ENCODE measurements at regions of chr7 and their contacts with region 1.

Region 1: DNA sequence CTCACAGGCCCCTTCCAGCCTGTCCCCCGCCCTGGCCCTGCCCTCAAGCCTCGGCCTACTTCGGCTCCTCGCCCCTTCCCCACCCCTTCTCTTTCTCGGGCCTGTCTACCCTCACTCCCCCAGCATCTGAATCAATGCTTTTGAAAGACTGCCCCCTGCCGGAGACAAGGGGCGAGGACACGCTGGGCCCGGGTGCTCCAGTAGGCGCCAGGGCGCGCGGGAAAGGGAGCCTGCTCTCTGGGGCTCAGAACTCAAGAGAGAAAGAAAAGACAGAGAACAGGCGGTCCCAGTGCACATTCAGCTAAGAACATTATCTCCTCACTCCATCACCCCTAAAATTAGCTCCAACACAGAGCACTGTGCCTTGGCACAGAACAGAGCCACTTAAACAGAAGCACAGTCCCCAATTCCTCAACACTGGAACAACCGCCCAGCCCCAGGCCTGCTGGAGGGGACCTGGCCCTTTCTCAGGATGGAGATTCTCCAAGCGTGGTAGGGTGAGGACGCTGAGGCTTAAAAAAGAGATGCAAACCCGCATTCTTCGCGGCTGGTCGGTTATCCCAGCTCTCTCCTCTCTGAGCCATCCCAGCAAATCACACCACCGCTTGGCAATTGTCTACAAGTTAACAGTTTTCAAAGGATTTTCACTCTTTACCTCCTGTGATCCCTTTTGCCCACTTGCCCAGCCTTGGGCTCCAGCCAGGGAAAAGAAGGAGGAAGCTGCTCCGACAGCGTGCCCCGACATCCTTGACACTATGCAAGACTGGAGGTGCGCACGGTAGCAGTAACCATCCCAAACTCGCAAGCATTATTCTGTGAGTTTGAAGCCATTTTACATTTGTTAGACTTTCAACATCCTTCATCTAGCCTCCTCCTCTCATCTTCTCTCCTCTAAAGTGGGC is 2.1 kb downstream of the GIGYF1 start:
- DNase-seq: peak; percentile 76 to 91 (median 83)
- ATAC-seq: peak; percentile 70 to 86 (median 82)
- H3K4me3 ChIP-seq: peak overlapping the region in 9 of 12 donors; percentile 74 to 100 (median 91)
- H3K27ac ChIP-seq: peak overlapping the region in 9 of 12 donors; percentile 12 to 90 (median 35)
- H3K4me1 ChIP-seq: peaks cover 5 to 64% (median 46%) of the 10 kb centered on the region in 12 donors
- H3K27me3 ChIP-seq: no peaks in the 10 kb centered on the region
- CTCF ChIP-seq: peak; percentile 83 to 93 (median 88)
- POLR2A ChIP-seq: no peak

Region 2: GRCh38 chr7:100469227-100470044 is 222.5 kb before region 1 on chr7:
- intact Hi-C with region 1: loop called in 9 of 10 experiments (anchors 2 to 10 kb)
- DNase-seq: peak; percentile 85 to 93 (median 88)
- ATAC-seq: peak; percentile 59 to 75 (median 70)
- H3K4me3 ChIP-seq: no peak overlapping the region
- H3K27ac ChIP-seq: peak overlapping the region in 10 of 12 donors; percentile 8 to 83 (median 64)
- H3K4me1 ChIP-seq: peaks cover 3 to 81% (median 48%) of the 10 kb centered on the region in 12 donors
- H3K27me3 ChIP-seq: no peaks in the 10 kb centered on the region
- CTCF ChIP-seq: peak; percentile 82 to 98 (median 94)
- POLR2A ChIP-seq: peak in 1 of 2 donors; percentile 18

Region 3: GRCh38 chr7:100563809-100564400 is 128.0 kb before region 1 on chr7:
- intact Hi-C with region 1: loop called (anchors 2 to 5 kb)
- DNase-seq: peak; percentile 78 to 88 (median 81)
- ATAC-seq: peak; percentile 37 to 70 (median 63)
- H3K4me3 ChIP-seq: no peak overlapping the region
- H3K27ac ChIP-seq: no peak overlapping the region
- H3K4me1 ChIP-seq: peaks cover 0 to 13% (median 3%) of the 10 kb centered on the region in 12 donors
- H3K27me3 ChIP-seq: no peaks in the 10 kb centered on the region
- CTCF ChIP-seq: peak; percentile 89 to 96 (median 94)
- POLR2A ChIP-seq: no peak

Region 4: DNA sequence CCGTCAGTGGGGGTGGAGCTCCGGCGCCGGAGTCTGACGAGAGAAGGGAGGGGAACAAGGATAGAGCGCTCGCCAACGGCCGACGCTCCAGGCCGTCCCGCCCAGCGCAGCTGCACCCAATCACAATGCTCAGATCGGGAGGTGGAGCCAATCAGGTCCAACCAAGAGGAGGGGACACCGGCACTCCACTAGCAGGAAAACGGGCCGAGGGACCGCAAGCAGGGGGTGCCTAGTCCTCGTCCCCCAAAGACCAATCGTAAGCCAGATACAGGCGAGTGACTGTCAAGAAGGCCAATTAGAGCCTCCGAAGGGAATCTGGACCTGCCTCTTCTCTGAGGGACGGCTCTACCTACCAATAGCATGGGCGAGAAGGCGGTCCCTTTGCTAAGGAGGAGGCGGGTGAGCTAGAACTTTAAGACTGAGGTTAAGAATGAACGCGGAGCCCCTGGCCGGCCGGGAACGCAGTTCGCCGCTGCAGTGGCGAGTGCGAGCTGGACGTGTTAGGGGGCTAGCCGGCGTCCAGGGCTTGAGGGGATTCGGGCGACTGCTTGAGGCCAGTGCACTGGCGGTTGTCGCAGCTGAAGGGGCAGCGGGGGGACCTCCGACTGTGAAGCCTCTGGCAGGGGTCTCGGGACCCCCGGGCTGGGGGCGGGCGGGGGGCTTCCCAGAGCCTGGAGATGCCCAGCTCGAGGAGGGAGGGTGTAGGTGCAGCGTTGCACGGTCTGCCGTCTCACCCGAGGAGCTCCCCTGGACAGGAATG is 105.5 kb before region 1 on chr7 and contains the start of gene FBXO24:
- intact Hi-C with region 1: loop called in 1 of 10 experiments (anchors 5 kb)
- DNase-seq: peak; percentile 100
- ATAC-seq: peak; percentile 91 to 97 (median 96)
- H3K4me3 ChIP-seq: peak within 1 kb of the TSS; percentile 75 to 100 (median 96)
- H3K27ac ChIP-seq: peak within 1 kb of the TSS; percentile 79 to 99 (median 96)
- H3K4me1 ChIP-seq: peaks cover 6 to 63% (median 41%) of the 10 kb centered on the region in 12 donors
- H3K27me3 ChIP-seq: no peaks in the 10 kb centered on the region
- CTCF ChIP-seq: no peak
- POLR2A ChIP-seq: peak in 1 of 2 donors; percentile 48
- total RNA-seq, gene FBXO24: 0.11 to 0.75 (median 0.48) TPM in 6 of 9 donors, not detected in the others

Region 5: GRCh38 chr7:100611974-100612729 is 79.8 kb before region 1 on chr7 and contains the start of gene MOSPD3:
- intact Hi-C with region 1: loop called in 4 of 10 experiments (anchors 5 kb)
- DNase-seq: peak; percentile 98 to 99 (median 98)
- ATAC-seq: peak; percentile 96 to 98 (median 98)
- H3K4me3 ChIP-seq: peak within 1 kb of the TSS; percentile 54 to 90 (median 76)
- H3K27ac ChIP-seq: peak within 1 kb of the TSS; percentile 75 to 98 (median 94)
- H3K4me1 ChIP-seq: peaks cover 0 to 24% (median 12%) of the 10 kb centered on the region in 12 donors
- H3K27me3 ChIP-seq: no peaks in the 10 kb centered on the region
- CTCF ChIP-seq: no peak
- POLR2A ChIP-seq: peak; percentile 53 to 58
- total RNA-seq, gene MOSPD3: 6.7 to 13.8 (median 10.4) TPM

Region 6: DNA sequence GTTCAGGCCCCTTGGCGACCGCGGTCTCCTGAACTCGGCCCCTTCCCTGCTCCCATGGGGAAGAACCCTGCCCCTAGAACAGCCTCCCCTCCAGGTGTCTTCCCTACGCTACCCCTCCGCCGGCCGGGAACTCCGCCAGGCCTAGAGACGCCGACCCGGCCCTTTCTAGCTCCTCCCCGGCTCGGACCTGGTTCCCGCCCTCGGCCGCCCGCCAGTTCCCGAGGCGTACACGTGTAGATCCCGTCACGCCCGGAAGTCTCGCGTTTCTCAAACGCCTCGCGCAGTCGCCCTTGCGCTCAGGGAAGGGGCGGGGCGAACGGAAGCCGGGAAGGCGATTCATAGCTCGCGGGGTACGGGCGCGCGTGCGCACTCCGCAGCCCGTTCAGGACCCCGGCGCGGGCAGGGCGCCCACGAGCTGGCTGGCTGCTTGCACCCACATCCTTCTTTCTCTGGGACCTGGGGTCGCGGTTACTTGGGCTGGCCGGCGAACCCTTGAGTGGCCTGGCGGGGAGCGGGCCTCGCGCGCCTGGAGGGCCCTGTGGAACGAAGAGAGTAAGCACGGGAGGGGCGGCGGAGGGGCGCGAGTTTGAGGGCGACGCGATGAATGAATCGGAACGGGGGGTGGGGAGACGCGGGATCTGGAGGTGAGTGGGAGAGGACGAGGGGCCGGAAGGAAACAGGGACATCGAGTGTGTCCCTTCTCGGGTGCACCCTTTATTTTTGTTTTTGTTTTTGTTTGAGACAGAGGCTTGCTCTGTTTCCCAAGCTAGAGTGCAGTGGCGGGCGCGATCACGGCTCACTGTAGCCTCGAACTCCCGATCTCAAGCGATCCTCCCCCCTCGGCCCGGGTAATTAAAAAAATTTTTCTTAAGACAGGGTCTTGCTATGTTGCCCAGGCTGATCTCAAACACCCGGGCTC is 14.1 kb after region 1 on chr7 and contains the start of gene POP7:
- intact Hi-C with region 1: loop called in 1 of 10 experiments (anchors 2 kb)
- DNase-seq: peak; percentile 99 to 100 (median 99)
- ATAC-seq: peak; percentile 96 to 99 (median 98)
- H3K4me3 ChIP-seq: peak within 1 kb of the TSS; percentile 53 to 88 (median 77)
- H3K27ac ChIP-seq: peak within 1 kb of the TSS; percentile 91 to 99 (median 94)
- H3K4me1 ChIP-seq: peaks cover 0 to 28% (median 18%) of the 10 kb centered on the region in 12 donors
- H3K27me3 ChIP-seq: no peaks in the 10 kb centered on the region
- CTCF ChIP-seq: no peak
- POLR2A ChIP-seq: peak in 1 of 2 donors; percentile 71
- total RNA-seq, gene POP7: 24.1 to 41.3 (median 28.9) TPM

Region 7: DNA sequence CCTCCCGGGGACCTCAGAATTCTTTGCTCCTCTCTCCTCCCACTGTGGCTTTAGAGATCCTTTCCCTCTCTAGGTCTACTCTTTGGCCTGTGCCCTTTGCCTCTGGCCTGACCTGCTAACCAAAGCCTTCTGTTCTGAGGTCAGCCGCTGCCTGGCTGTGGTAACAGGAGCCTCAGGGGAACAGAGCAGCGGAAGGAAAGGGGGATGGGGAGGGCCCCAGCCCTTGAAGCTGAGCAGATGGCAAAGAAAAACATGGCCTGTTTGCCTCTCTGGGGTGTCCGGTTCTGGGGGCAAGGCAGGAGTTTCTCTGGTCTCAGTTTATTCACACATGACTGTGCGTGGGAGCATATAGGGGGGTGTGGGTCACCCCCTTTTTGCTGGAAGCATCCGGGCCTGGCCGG is 699.0 kb after region 1 on chr7:
- intact Hi-C with region 1: no loop called
- DNase-seq: peak; percentile 38 to 69 (median 53)
- ATAC-seq: peak in 3 of 4 donors; percentile 44 to 76 (median 63)
- H3K4me3 ChIP-seq: no peak overlapping the region
- H3K27ac ChIP-seq: no peak overlapping the region
- H3K4me1 ChIP-seq: peaks cover 0 to 18% (median 0%) of the 10 kb centered on the region in 12 donors
- H3K27me3 ChIP-seq: peaks cover 0 to 46% (median 12%) of the 10 kb centered on the region in 9 donors
- CTCF ChIP-seq: no peak
- POLR2A ChIP-seq: no peak